Ovary (tissue), 10 donors: ENCODE measurements at regions of chr10 and their contacts with region 1.

Region 1: GRCh38 chr10:103618575-103619423 is 125.3 kb downstream of the NEURL1 start:
- DNase-seq: peak; percentile 62 to 88 (median 82)
- H3K4me3 ChIP-seq: no peak overlapping the region
- H3K27ac ChIP-seq: peak overlapping the region in 1 of 2 donors; percentile 49
- H3K4me1 ChIP-seq: peaks cover 46% of the 10 kb centered on the region
- H3K27me3 ChIP-seq: no peaks in the 10 kb centered on the region
- CTCF ChIP-seq: no peak
- EP300 ChIP-seq: no peak
- POLR2A ChIP-seq: no peak

Region 2: GRCh38 chr10:103367782-103368518 is 250.8 kb before region 1 on chr10 and contains the start of gene TAF5:
- intact Hi-C with region 1: no loop called
- DNase-seq: peak; percentile 89 to 92 (median 90)
- H3K4me3 ChIP-seq: peak within 1 kb of the TSS; percentile 61
- H3K27ac ChIP-seq: peak within 1 kb of the TSS; percentile 51 to 76
- H3K4me1 ChIP-seq: peaks cover 5% of the 10 kb centered on the region
- H3K27me3 ChIP-seq: no peaks in the 10 kb centered on the region
- CTCF ChIP-seq: peak in 2 of 3 donors; percentile 9 to 43
- EP300 ChIP-seq: no peak
- POLR2A ChIP-seq: peak; percentile 92
- total RNA-seq, gene TAF5: 3.9 to 6.6 (median 4.3) TPM

Region 3: GRCh38 chr10:103476046-103476995 is 142.5 kb before region 1 on chr10:
- intact Hi-C with region 1: no loop called
- DNase-seq: no peak
- H3K4me3 ChIP-seq: no peak overlapping the region
- H3K27ac ChIP-seq: no peak overlapping the region
- H3K4me1 ChIP-seq: peaks cover 1% of the 10 kb centered on the region
- H3K27me3 ChIP-seq: no peaks in the 10 kb centered on the region
- CTCF ChIP-seq: no peak
- EP300 ChIP-seq: no peak
- POLR2A ChIP-seq: no peak

Region 4: GRCh38 chr10:103659674-103660363 is 41.0 kb after region 1 on chr10:
- intact Hi-C with region 1: loop called in 2 of 4 experiments (anchors 5 to 10 kb)
- DNase-seq: peak in 4 of 5 donors; percentile 71 to 76 (median 74)
- H3K4me3 ChIP-seq: peak overlapping the region; percentile 85
- H3K27ac ChIP-seq: peak overlapping the region; percentile 93 to 97
- H3K4me1 ChIP-seq: peaks cover 9% of the 10 kb centered on the region
- H3K27me3 ChIP-seq: no peaks in the 10 kb centered on the region
- CTCF ChIP-seq: peak in 1 of 3 donors; percentile 2
- EP300 ChIP-seq: no peak
- POLR2A ChIP-seq: no peak

Region 5: GRCh38 chr10:103678178-103678526 is 59.4 kb after region 1 on chr10:
- intact Hi-C with region 1: no loop called
- DNase-seq: peak; percentile 91 to 95 (median 93)
- H3K4me3 ChIP-seq: peak overlapping the region; percentile 36
- H3K27ac ChIP-seq: peak overlapping the region; percentile 73 to 88
- H3K4me1 ChIP-seq: peaks cover 18% of the 10 kb centered on the region
- H3K27me3 ChIP-seq: no peaks in the 10 kb centered on the region
- CTCF ChIP-seq: no peak
- EP300 ChIP-seq: no peak
- POLR2A ChIP-seq: peak; percentile 50

Region 6: DNA sequence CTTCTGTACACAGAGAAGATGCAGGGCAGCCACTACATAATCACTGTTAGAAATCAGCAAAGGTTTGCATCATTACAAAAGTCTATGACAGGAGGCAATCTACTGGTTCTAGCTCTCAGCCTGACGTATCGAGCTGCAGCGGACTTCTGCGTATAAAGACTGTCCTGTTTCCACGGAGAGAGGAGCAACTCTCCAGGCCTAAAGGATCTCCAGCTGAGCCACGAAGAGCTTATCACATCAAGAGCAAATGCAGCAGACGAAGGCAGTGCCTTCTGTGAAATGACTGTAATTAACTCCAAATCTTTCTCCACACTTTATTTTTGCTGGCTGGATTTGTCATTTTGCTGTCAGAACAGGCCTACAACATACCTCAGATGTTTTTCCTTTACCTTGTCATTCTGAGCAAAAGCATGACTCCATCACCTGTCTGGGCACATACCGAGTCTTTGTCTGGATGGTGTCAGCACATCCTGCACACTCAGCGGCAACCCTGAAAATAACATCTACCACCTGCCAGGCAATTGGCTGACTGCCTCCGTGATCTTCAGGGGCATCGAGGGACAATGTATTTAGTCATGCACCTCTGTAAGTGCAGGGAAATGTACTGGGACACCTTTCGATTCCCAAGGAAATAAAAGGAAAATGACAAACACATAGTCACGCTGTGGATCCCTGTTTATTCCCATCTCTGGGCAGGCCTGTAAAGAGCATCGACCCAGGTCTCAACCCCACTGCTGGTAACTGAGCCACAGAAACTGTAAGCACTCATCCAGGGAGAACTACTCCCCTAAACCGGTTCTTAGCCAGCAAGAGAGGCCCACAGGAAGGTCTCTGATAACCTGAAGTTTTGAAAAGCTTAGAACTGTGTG is 262.9 kb after region 1 on chr10:
- intact Hi-C with region 1: no loop called
- DNase-seq: no peak
- H3K4me3 ChIP-seq: no peak overlapping the region
- H3K27ac ChIP-seq: no peak overlapping the region
- H3K4me1 ChIP-seq: no peaks in the 10 kb centered on the region
- H3K27me3 ChIP-seq: no peaks in the 10 kb centered on the region
- CTCF ChIP-seq: no peak
- EP300 ChIP-seq: no peak
- POLR2A ChIP-seq: no peak